ENCODE measurements at regions of chr7 and their contacts with region 1.

Region 1: GRCh38 chr7:32803406-32804141 is 88.0 kb downstream of the KBTBD2 start:
- DNase-seq: no peak
- H3K4me3 ChIP-seq: no peak overlapping the region
- H3K27ac ChIP-seq: no peak overlapping the region
- H3K4me1 ChIP-seq: no peaks in the 10 kb centered on the region
- H3K27me3 ChIP-seq: no peaks in the 10 kb centered on the region
- CTCF ChIP-seq: no peak
- EP300 ChIP-seq: no peak
- POLR2A ChIP-seq: no peak

Region 2: GRCh38 chr7:32858648-32859047 is 55.1 kb after region 1 on chr7:
- intact Hi-C with region 1: no loop called
- DNase-seq: no peak
- H3K4me3 ChIP-seq: no peak overlapping the region
- H3K27ac ChIP-seq: no peak overlapping the region
- H3K4me1 ChIP-seq: no peaks in the 10 kb centered on the region
- H3K27me3 ChIP-seq: no peaks in the 10 kb centered on the region
- CTCF ChIP-seq: no peak
- EP300 ChIP-seq: no peak
- POLR2A ChIP-seq: no peak

Region 3: GRCh38 chr7:32871624-32872371 is 68.2 kb after region 1 on chr7:
- intact Hi-C with region 1: no loop called
- DNase-seq: no peak
- H3K4me3 ChIP-seq: no peak overlapping the region
- H3K27ac ChIP-seq: no peak overlapping the region
- H3K4me1 ChIP-seq: peaks cover 0 to 6% (median 2%) of the 10 kb centered on the region in 4 donors
- H3K27me3 ChIP-seq: no peaks in the 10 kb centered on the region
- CTCF ChIP-seq: no peak
- EP300 ChIP-seq: no peak
- POLR2A ChIP-seq: no peak

Region 4: DNA sequence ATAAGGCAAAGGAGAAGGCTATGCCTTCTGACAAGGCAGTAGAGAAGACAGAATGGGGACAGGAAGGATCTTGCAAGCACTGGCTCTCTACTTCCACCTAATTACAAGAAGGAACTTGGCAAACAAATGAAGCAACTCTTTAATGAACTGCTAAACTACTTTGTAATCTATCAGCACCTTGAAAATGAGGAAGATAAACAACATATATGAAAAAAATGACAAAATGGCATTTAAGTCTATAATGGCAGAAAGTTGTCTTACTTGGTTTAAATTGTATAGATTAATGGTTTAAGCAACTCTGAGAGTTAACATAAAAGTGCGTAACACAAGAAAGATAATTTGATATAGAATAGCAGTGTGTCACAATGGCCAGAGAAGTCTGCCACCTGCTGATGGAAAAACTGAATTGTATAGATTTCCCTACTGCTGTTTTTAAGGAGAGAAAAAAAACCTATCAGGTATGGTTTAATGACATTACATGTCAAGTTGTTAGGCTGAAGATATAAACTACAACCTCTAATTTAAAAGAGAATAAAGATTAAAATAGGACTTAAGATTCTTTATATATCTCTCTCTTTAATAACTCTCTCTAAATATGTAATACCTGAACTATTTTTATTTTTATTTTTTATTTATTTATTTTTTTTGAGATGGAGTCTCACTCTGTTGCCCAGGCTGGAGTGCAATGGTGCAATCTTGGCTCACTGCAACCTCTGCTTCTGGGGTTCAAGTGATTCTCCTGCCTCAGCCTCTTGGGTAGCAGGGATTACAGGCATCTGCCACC is 247.2 kb after region 1 on chr7:
- intact Hi-C with region 1: loop called (anchors 5 kb)
- DNase-seq: no peak
- H3K4me3 ChIP-seq: peak overlapping the region in 1 of 4 donors; percentile 23
- H3K27ac ChIP-seq: peak overlapping the region; percentile 38 to 74 (median 56)
- H3K4me1 ChIP-seq: peaks cover 0 to 30% (median 17%) of the 10 kb centered on the region in 4 donors
- H3K27me3 ChIP-seq: no peaks in the 10 kb centered on the region
- CTCF ChIP-seq: peak; percentile 23 to 65 (median 50)
- EP300 ChIP-seq: no peak
- POLR2A ChIP-seq: no peak

Region 5: DNA sequence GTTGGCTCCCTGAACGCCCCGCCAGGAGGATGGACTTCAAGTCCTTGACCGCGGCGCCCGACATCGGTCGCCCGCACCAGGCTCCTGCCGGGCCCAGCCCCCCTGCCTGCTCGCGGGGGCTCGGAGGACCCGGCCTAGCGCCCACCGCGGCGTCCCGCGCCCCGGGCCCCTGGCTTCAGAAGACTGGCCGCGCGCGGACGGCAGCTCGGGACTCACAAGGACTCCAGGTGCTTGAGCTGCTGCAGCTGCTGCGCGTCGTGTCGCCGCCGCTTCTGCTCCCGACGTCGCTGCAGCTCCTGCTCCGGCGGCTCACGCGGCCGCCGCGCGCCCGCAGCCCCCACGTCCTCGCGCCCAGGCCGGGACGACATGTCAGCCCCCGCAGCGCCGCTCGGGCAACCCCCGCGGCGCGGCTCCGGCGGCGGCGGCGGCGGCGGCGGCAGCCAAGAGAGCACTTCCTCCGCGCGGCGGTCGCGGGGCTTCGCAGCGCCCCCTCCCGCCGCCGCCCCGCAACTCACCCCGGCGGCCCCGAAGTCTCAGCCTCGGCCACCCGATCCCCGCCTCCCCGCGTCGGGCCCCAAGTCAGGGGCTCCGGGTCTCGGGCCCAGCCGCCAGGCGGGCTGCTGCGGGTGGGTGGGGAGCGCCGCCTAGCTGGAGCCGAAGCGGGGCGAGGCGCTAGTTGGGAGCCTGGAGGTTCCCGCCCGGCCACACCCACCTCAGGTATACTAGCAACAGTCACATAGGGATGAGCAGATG is 305.6 kb after region 1 on chr7 and contains the start of gene RP9:
- intact Hi-C with region 1: loop called (anchors 2 kb)
- DNase-seq: peak; percentile 77
- H3K4me3 ChIP-seq: peak within 1 kb of the TSS; percentile 60 to 99 (median 97)
- H3K27ac ChIP-seq: peak within 1 kb of the TSS; percentile 82 to 89 (median 88)
- H3K4me1 ChIP-seq: peaks cover 0 to 39% (median 30%) of the 10 kb centered on the region in 4 donors
- H3K27me3 ChIP-seq: no peaks in the 10 kb centered on the region
- CTCF ChIP-seq: peak in 2 of 4 experiments; percentile 30 to 63
- EP300 ChIP-seq: no peak
- POLR2A ChIP-seq: no peak
- total RNA-seq, gene RP9: 6.9 to 24.6 (median 9.2) TPM

Measured in sigmoid colon (tissue), 7 donors.